ENCODE measurements at regions of chr22 and their contacts with region 1.

Region 1: GRCh38 chr22:44363272-44363979 is 50.7 kb upstream of the SHISAL1 start:
- DNase-seq: peak; percentile 97
- H3K4me3 ChIP-seq: no peak overlapping the region
- H3K27ac ChIP-seq: peak overlapping the region; percentile 82 to 87 (median 86)
- H3K4me1 ChIP-seq: peaks cover 0 to 68% (median 59%) of the 10 kb centered on the region in 4 donors
- H3K27me3 ChIP-seq: no peaks in the 10 kb centered on the region
- CTCF ChIP-seq: no peak
- EP300 ChIP-seq: peak; percentile 37 to 89 (median 77)
- POLR2A ChIP-seq: no peak

Region 2: DNA sequence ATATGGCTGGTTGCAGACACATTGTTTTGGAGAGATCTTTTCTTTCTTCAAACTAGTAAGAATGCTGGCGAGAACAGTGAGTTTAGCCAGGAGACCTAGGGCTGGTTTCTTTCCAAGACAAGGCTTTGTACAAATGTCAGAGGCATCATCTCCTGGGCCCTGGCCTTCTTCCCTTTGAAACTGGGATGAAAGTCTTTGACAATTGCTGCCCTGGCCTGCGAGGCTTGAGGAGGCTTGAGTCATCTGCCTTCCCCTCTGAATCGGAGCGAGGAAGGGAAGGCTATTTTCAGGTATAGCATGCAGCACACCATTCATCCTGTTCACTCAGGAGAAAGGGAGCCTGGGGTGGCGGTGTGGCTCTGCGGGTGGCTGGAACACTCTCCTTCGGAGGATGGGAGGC is 204.2 kb before region 1 on chr22:
- intact Hi-C with region 1: loop called (anchors 2 kb)
- DNase-seq: peak; percentile 92
- H3K4me3 ChIP-seq: no peak overlapping the region
- H3K27ac ChIP-seq: peak overlapping the region; percentile 49 to 86 (median 82)
- H3K4me1 ChIP-seq: peaks cover 0 to 50% (median 39%) of the 10 kb centered on the region in 4 donors
- H3K27me3 ChIP-seq: no peaks in the 10 kb centered on the region
- CTCF ChIP-seq: no peak
- EP300 ChIP-seq: peak in 3 of 4 donors; percentile 64 to 90 (median 81)
- POLR2A ChIP-seq: no peak

Region 3: DNA sequence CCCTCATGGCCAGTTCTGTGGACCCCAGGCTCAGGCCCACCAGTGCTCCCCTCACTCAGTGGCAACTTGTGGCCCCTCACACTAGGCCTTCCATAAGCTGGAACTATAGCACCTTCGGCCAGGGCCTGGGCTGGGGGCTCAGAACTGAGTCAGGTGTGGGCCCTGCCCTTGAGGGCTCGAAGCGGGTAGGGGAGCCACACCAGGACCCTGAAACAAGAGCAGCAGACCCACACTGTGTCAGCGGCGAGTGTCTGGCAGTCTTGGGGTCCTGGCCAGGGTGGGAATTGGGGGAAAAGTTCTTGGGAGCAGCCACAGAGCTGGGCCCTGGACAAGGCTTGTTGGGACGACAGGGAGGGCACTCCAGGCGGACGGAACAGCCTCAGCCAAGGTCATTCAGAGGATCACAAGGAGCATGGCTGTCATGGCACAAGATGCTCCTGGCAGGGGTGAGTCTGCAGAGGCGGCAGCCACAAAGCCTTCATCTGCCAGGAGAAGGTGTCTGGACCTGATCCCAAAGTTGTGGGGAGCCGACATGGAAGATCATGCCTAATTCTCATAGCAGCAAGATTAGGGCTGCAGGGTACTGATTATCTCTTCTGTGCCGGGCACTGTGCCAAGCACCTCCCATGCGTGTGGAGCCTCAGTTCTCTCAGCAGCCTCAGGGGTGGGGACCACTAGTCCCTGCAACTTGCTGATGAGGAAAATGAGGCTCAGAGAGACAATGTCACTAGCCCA is 101.4 kb before region 1 on chr22:
- intact Hi-C with region 1: no loop called
- DNase-seq: peak; percentile 62
- H3K4me3 ChIP-seq: no peak overlapping the region
- H3K27ac ChIP-seq: no peak overlapping the region
- H3K4me1 ChIP-seq: peaks cover 0 to 14% (median 4%) of the 10 kb centered on the region in 4 donors
- H3K27me3 ChIP-seq: no peaks in the 10 kb centered on the region
- CTCF ChIP-seq: no peak
- EP300 ChIP-seq: no peak
- POLR2A ChIP-seq: no peak

Region 4: DNA sequence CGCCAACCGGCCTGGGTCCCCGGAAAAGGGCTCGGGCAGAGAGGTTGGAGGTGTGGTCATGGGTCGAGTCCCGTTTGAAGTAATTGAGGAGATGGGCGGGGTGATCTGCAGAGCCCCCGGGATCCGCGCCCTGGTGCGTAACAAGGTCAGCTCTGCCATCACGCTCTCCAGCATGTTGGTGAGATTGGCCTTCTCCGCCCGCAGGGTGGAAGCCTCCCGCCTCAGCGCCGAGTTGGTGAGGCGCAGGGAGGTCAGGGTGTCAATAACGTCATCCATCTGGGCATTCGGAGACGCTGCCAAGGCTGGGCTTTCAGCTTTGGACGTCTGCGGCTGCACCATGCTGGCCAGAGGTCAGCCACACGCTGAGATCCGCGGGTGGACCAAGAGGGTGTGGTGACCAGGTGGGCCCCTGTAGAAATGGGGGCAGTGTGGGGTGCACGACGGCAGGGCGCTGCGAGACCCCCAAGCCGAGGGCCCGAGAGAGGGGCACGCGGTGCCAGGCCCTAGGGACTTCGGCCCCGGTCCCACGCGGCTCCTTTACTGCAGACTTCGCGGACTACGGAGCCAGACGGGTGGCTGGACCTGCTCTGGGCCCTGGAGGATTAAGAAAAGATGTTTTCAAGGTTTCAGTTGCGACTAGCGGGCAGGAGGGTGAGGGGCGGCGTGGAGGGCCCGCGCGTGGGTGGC is 133.9 kb after region 1 on chr22:
- intact Hi-C with region 1: loop called (anchors 5 kb)
- DNase-seq: peak; percentile 72
- H3K4me3 ChIP-seq: peak overlapping the region; percentile 58 to 94 (median 72)
- H3K27ac ChIP-seq: peak overlapping the region; percentile 83 to 88 (median 83)
- H3K4me1 ChIP-seq: peaks cover 0 to 43% (median 26%) of the 10 kb centered on the region in 4 donors
- H3K27me3 ChIP-seq: no peaks in the 10 kb centered on the region
- CTCF ChIP-seq: no peak
- EP300 ChIP-seq: no peak
- POLR2A ChIP-seq: no peak

Region 5: GRCh38 chr22:44550711-44551491 is 187.5 kb after region 1 on chr22:
- intact Hi-C with region 1: loop called (anchors 5 kb)
- DNase-seq: peak; percentile 96
- H3K4me3 ChIP-seq: peak overlapping the region; percentile 17 to 47 (median 43)
- H3K27ac ChIP-seq: peak overlapping the region; percentile 71 to 86 (median 84)
- H3K4me1 ChIP-seq: peaks cover 0 to 17% (median 12%) of the 10 kb centered on the region in 4 donors
- H3K27me3 ChIP-seq: no peaks in the 10 kb centered on the region
- CTCF ChIP-seq: no peak
- EP300 ChIP-seq: peak in 1 of 4 donors; percentile 7
- POLR2A ChIP-seq: no peak